ENCODE measurements at regions of chr3 and their contacts with region 1.

Region 1: GRCh38 chr3:16467393-16467792 is 46.1 kb downstream of the RFTN1 start:
- DNase-seq: peak in 8 of 9 donors; percentile 14 to 77 (median 39)
- ATAC-seq: peak; percentile 80
- H3K4me3 ChIP-seq: no peak overlapping the region
- H3K4me3 Mint-ChIP-seq: peak overlapping the region; percentile 68 to 86 (median 79)
- H3K27ac ChIP-seq: peak overlapping the region; percentile 68
- H3K27ac Mint-ChIP-seq: peak overlapping the region; percentile 49 to 99 (median 95)
- H3K4me1 ChIP-seq: peaks cover 6 to 44% of the 10 kb centered on the region in 2 donors
- H3K4me1 Mint-ChIP-seq: peaks cover 55 to 84% (median 67%) of the 10 kb centered on the region in 7 donors
- H3K27me3 ChIP-seq: no peaks in the 10 kb centered on the region
- H3K27me3 Mint-ChIP-seq: no peaks in the 10 kb centered on the region

Region 2: DNA sequence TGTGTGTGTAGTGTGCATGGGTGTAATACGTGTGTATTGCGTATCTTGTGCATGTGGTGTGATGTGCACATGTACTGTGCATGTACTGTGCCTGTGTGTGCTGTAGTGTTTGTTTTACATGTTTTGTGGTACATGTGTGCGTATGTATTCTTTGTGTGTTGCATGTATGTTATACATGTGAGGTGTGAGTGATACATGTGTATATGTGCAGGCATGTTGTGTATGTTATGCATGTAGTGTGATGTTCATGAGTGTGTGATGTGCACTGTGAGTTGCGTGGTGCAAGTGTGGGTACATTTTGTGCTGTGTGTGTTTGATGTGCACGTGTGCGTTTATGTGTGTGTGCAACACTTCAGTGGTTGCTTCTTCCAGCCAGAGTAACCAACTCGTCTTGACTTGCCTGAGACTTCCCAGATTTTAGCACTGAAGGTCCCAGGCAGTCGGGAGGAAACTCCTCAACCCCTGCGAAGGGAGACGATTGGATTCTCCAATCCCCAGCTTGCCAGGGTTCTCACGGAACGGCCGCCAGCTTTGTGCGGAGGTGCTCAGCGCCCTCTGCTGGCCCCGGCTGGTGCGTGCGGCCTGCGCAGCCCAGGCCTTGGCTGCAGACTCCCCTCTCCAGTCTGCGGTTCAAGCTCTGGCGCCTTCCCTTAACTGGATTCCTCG is 289.3 kb before region 1 on chr3:
- CTCF ChIA-PET with region 1: no interaction called
- POLR2A ChIA-PET with region 1: no interaction called
- intact Hi-C with region 1: no loop called
- DNase-seq: peak; percentile 10 to 72 (median 48)
- ATAC-seq: peak; percentile 75
- H3K4me3 ChIP-seq: no peak overlapping the region
- H3K4me3 Mint-ChIP-seq: peak overlapping the region in 2 of 10 donors; percentile 38 to 39
- H3K27ac ChIP-seq: no peak overlapping the region
- H3K27ac Mint-ChIP-seq: peak overlapping the region in 1 of 9 donors; percentile 40
- H3K4me1 ChIP-seq: no peaks in the 10 kb centered on the region
- H3K4me1 Mint-ChIP-seq: peaks cover 0 to 7% (median 5%) of the 10 kb centered on the region in 7 donors
- H3K27me3 ChIP-seq: no peaks in the 10 kb centered on the region
- H3K27me3 Mint-ChIP-seq: peaks cover 9 to 23% (median 19%) of the 10 kb centered on the region in 5 donors

Region 3: GRCh38 chr3:16378920-16379319 is 88.5 kb before region 1 on chr3:
- CTCF ChIA-PET with region 1: no interaction called
- POLR2A ChIA-PET with region 1: no interaction called
- intact Hi-C with region 1: loop called (anchors 5 kb)
- DNase-seq: no peak
- ATAC-seq: peak; percentile 19
- H3K4me3 ChIP-seq: no peak overlapping the region
- H3K4me3 Mint-ChIP-seq: peak overlapping the region in 8 of 10 donors; percentile 26 to 85 (median 42)
- H3K27ac ChIP-seq: no peak overlapping the region
- H3K27ac Mint-ChIP-seq: peak overlapping the region in 8 of 9 donors; percentile 54 to 94 (median 90)
- H3K4me1 ChIP-seq: peaks cover 28 to 60% of the 10 kb centered on the region in 2 donors
- H3K4me1 Mint-ChIP-seq: peaks cover 52 to 98% (median 87%) of the 10 kb centered on the region in 7 donors
- H3K27me3 ChIP-seq: no peaks in the 10 kb centered on the region
- H3K27me3 Mint-ChIP-seq: no peaks in the 10 kb centered on the region

Region 4: DNA sequence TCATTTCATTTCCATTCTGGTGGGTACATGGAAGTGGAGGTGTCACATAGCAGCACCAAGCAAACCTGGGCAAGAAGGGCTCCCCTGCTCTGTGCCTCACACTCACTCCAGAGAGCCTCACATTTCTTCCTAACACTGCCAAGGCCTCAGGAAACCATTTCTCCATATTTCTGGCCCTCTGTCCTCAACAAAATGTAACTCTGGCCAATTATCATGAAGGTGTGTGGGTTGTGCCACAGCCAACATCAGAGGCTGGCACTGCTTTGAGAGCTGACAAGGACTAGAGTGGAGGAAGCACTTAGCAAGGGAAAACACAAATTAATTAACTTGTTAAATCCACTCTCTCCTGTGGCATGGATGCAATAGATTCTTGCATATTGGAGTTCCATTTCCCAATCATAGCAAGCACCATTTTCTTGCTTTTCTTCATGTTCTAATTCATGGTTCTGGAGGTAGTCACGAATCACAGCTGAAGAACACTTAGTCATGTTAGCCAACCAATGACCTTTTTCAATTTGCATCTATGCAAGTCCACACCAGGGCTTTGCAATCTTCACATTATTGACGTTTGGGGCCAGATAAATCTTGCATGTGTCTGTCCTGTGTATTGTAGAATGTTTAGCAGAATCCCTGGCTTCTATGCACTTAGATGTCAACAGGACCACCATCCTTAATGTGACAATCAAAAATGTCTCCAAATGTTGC is 658.5 kb after region 1 on chr3:
- CTCF ChIA-PET with region 1: no interaction called
- POLR2A ChIA-PET with region 1: no interaction called
- intact Hi-C with region 1: no loop called
- DNase-seq: no peak
- ATAC-seq: no peak
- H3K4me3 ChIP-seq: no peak overlapping the region
- H3K4me3 Mint-ChIP-seq: no peak overlapping the region
- H3K27ac ChIP-seq: no peak overlapping the region
- H3K27ac Mint-ChIP-seq: no peak overlapping the region
- H3K4me1 ChIP-seq: no peaks in the 10 kb centered on the region
- H3K4me1 Mint-ChIP-seq: peaks cover 0 to 3% (median 0%) of the 10 kb centered on the region in 7 donors
- H3K27me3 ChIP-seq: no peaks in the 10 kb centered on the region
- H3K27me3 Mint-ChIP-seq: no peaks in the 10 kb centered on the region

Region 5: GRCh38 chr3:17518189-17519059 is 1051.0 kb after region 1 on chr3:
- CTCF ChIA-PET with region 1: no interaction called
- POLR2A ChIA-PET with region 1: no interaction called
- intact Hi-C with region 1: no loop called
- DNase-seq: no peak
- ATAC-seq: no peak
- H3K4me3 ChIP-seq: no peak overlapping the region
- H3K4me3 Mint-ChIP-seq: no peak overlapping the region
- H3K27ac ChIP-seq: no peak overlapping the region
- H3K27ac Mint-ChIP-seq: no peak overlapping the region
- H3K4me1 ChIP-seq: peaks cover 0 to 8% of the 10 kb centered on the region in 2 donors
- H3K4me1 Mint-ChIP-seq: peaks cover 0 to 11% (median 0%) of the 10 kb centered on the region in 7 donors
- H3K27me3 ChIP-seq: no peaks in the 10 kb centered on the region
- H3K27me3 Mint-ChIP-seq: no peaks in the 10 kb centered on the region